ENCODE measurements at regions of chr1 and their contacts with region 1.

Region 1: DNA sequence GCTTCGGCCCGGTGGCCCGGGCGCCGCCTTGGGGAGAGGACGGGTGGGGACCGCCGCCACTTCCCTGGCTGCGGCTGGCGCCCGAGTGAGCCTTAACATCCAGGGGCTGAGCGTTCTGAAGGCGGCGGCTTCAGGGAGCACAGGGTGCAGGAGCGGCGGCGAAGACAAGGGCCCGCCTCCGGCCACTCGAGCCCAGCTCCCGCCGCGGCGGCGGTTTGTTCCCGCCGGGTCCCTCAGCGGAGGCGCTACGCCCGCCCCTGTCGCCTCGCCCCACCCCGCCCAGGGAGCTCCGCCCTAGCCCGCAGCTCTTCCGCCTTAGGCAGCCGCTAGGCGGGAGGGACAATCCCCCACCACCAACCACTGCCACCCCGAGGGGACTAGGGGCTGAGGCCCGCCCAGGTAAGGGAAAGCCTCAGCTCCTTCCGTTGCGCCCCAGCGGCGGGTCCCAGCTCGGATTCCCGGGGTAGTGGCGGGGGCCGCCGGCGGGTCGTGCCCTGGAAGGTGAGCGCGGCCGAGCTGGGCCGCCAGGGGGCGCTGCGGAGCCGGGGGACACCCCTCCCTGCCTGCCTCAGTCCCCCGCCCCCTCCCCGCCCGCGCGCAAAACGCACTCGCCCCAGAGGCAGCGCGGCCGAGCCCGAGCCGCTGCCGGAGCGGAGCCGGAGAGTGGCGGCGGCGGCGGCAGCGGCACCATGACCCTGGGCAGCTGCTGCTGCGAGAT is at the start of gene FOXD2:
- DNase-seq: peak; percentile 87 to 97 (median 92)
- ATAC-seq: peak; percentile 87
- H3K4me3 ChIP-seq: peak within 1 kb of the TSS; percentile 60 to 79
- H3K4me3 Mint-ChIP-seq: peak within 1 kb of the TSS; percentile 86
- H3K27ac ChIP-seq: peak within 1 kb of the TSS; percentile 25 to 61
- H3K27ac Mint-ChIP-seq: peak within 1 kb of the TSS; percentile 73
- H3K4me1 ChIP-seq: peaks cover 31% of the 10 kb centered on the region
- H3K4me1 Mint-ChIP-seq: peaks cover 35% of the 10 kb centered on the region
- H3K27me3 ChIP-seq: peaks cover 21 to 28% of the 10 kb centered on the region in 2 experiments
- H3K27me3 Mint-ChIP-seq: peaks cover 18% of the 10 kb centered on the region
- CTCF ChIP-seq: peak; percentile 97
- total RNA-seq, gene FOXD2: 0.35 to 0.56 TPM

Region 2: GRCh38 chr1:47313915-47314664 is 123.5 kb before region 1 on chr1 and contains the start of gene STIL:
- CTCF ChIA-PET with region 1: interaction called, 4 read pairs
- POLR2A ChIA-PET with region 1: no interaction called
- intact Hi-C with region 1: loop called (anchors 1 kb)
- DNase-seq: peak; percentile 91 to 99 (median 96)
- ATAC-seq: peak; percentile 96
- H3K4me3 ChIP-seq: peak within 1 kb of the TSS; percentile 54 to 81
- H3K4me3 Mint-ChIP-seq: peak within 1 kb of the TSS; percentile 95
- H3K27ac ChIP-seq: peak within 1 kb of the TSS; percentile 56 to 83
- H3K27ac Mint-ChIP-seq: peak within 1 kb of the TSS; percentile 95
- H3K4me1 ChIP-seq: peaks cover 3% of the 10 kb centered on the region
- H3K4me1 Mint-ChIP-seq: peaks cover 13% of the 10 kb centered on the region
- H3K27me3 ChIP-seq: no peaks in the 10 kb centered on the region
- H3K27me3 Mint-ChIP-seq: no peaks in the 10 kb centered on the region
- CTCF ChIP-seq: no peak
- total RNA-seq, gene STIL: 1.4 to 1.8 TPM

Region 3: GRCh38 chr1:47424336-47424982 is 13.1 kb before region 1 on chr1:
- CTCF ChIA-PET with region 1: interaction called, 10 read pairs
- POLR2A ChIA-PET with region 1: no interaction called
- intact Hi-C with region 1: no loop called
- DNase-seq: peak in 1 of 9 experiments; percentile 26
- ATAC-seq: no peak
- H3K4me3 ChIP-seq: no peak overlapping the region
- H3K4me3 Mint-ChIP-seq: no peak overlapping the region
- H3K27ac ChIP-seq: no peak overlapping the region
- H3K27ac Mint-ChIP-seq: no peak overlapping the region
- H3K4me1 ChIP-seq: no peaks in the 10 kb centered on the region
- H3K4me1 Mint-ChIP-seq: peaks cover 2% of the 10 kb centered on the region
- H3K27me3 ChIP-seq: peaks cover 0 to 10% of the 10 kb centered on the region in 2 experiments
- H3K27me3 Mint-ChIP-seq: peaks cover 28% of the 10 kb centered on the region
- CTCF ChIP-seq: peak; percentile 26

Region 4: GRCh38 chr1:47527658-47528255 is 90.2 kb after region 1 on chr1:
- CTCF ChIA-PET with region 1: no interaction called
- POLR2A ChIA-PET with region 1: no interaction called
- intact Hi-C with region 1: loop called in 1 of 2 experiments (anchors 10 kb)
- DNase-seq: no peak
- ATAC-seq: no peak
- H3K4me3 ChIP-seq: no peak overlapping the region
- H3K4me3 Mint-ChIP-seq: no peak overlapping the region
- H3K27ac ChIP-seq: no peak overlapping the region
- H3K27ac Mint-ChIP-seq: no peak overlapping the region
- H3K4me1 ChIP-seq: no peaks in the 10 kb centered on the region
- H3K4me1 Mint-ChIP-seq: no peaks in the 10 kb centered on the region
- H3K27me3 ChIP-seq: peaks cover 0 to 5% of the 10 kb centered on the region in 2 experiments
- H3K27me3 Mint-ChIP-seq: peaks cover 68% of the 10 kb centered on the region
- CTCF ChIP-seq: no peak

Region 5: GRCh38 chr1:47624531-47624930 is 186.9 kb after region 1 on chr1:
- CTCF ChIA-PET with region 1: interaction called, 4 read pairs
- POLR2A ChIA-PET with region 1: no interaction called
- intact Hi-C with region 1: loop called (anchors 2 to 10 kb)
- DNase-seq: peak in 3 of 9 experiments; percentile 11 to 36 (median 28)
- ATAC-seq: no peak
- H3K4me3 ChIP-seq: no peak overlapping the region
- H3K4me3 Mint-ChIP-seq: no peak overlapping the region
- H3K27ac ChIP-seq: no peak overlapping the region
- H3K27ac Mint-ChIP-seq: no peak overlapping the region
- H3K4me1 ChIP-seq: no peaks in the 10 kb centered on the region
- H3K4me1 Mint-ChIP-seq: no peaks in the 10 kb centered on the region
- H3K27me3 ChIP-seq: no peaks in the 10 kb centered on the region
- H3K27me3 Mint-ChIP-seq: peaks cover 15% of the 10 kb centered on the region
- CTCF ChIP-seq: no peak

Region 6: DNA sequence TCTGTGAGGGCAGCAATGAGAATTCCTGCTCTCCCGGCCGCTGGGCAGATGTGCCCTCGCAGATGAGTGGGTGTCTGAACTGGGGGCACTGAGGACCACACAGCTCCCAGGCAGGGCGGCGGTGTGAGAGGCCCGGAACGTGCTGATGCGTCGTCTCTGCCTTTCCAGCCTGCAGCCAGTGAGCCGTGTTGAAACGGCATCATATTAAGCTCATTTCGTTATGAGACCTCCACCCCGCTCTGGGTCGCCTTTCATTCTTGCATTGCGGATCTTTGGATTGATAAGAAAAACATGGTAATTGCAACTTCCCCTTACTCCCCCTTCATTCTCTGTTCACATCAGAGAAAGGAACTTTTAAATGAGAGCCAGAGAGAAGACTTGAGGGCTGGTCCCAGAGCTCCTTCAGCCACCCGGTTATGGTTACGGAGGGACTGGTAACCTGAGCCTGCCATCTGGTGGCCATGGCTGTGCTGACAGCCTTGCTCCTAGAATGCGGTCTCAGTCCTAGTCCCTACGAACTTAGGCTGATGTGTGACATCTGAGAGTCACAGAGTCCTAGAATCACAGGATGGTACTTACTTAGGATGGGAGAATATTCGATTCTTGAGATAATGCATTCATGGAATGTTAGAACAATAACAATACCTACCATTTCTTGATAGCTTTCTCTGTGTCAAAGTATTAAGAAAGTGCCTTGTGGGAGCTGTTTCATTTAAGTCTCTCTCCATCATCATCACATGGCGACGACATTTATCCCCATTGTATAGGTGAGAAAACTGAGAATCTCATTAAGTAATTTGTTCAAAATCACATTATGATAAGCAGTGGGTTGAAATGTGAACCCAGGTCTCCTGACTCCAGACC is 288.6 kb after region 1 on chr1:
- CTCF ChIA-PET with region 1: interaction called, 17 read pairs
- POLR2A ChIA-PET with region 1: interaction called, 3 read pairs
- intact Hi-C with region 1: loop called (anchors 1 kb)
- DNase-seq: peak; percentile 24 to 71 (median 59)
- ATAC-seq: peak; percentile 71
- H3K4me3 ChIP-seq: no peak overlapping the region
- H3K4me3 Mint-ChIP-seq: peak overlapping the region; percentile 62
- H3K27ac ChIP-seq: no peak overlapping the region
- H3K27ac Mint-ChIP-seq: no peak overlapping the region
- H3K4me1 ChIP-seq: no peaks in the 10 kb centered on the region
- H3K4me1 Mint-ChIP-seq: peaks cover 11% of the 10 kb centered on the region
- H3K27me3 ChIP-seq: peaks cover 2 to 4% of the 10 kb centered on the region in 2 experiments
- H3K27me3 Mint-ChIP-seq: peaks cover 31% of the 10 kb centered on the region
- CTCF ChIP-seq: peak; percentile 71

Measured in CD8-positive, alpha-beta T cell (primary cell).